ENCODE measurements at regions of chr22 and their contacts with region 1.

Region 1: GRCh38 chr22:49992921-49993648 is 19.5 kb downstream of the IL17REL start:
- DNase-seq: peak; percentile 84
- ATAC-seq: peak; percentile 97
- H3K4me3 Mint-ChIP-seq: no peak overlapping the region
- H3K27ac Mint-ChIP-seq: no peak overlapping the region
- H3K4me1 Mint-ChIP-seq: peaks cover 8% of the 10 kb centered on the region
- H3K27me3 Mint-ChIP-seq: peaks cover 3% of the 10 kb centered on the region
- CTCF ChIP-seq: peak; percentile 84

Region 2: GRCh38 chr22:49960159-49961004 is 32.7 kb before region 1 on chr22 and contains the start of gene PIM3:
- CTCF ChIA-PET with region 1: no interaction called
- POLR2A ChIA-PET with region 1: no interaction called
- intact Hi-C with region 1: no loop called
- DNase-seq: peak; percentile 96
- ATAC-seq: peak; percentile 79
- H3K4me3 Mint-ChIP-seq: peak within 1 kb of the TSS; percentile 95
- H3K27ac Mint-ChIP-seq: peak within 1 kb of the TSS; percentile 95
- H3K4me1 Mint-ChIP-seq: peaks cover 25% of the 10 kb centered on the region
- H3K27me3 Mint-ChIP-seq: no peaks in the 10 kb centered on the region
- CTCF ChIP-seq: no peak
- total RNA-seq, gene PIM3: 146 to 158 TPM

Region 3: DNA sequence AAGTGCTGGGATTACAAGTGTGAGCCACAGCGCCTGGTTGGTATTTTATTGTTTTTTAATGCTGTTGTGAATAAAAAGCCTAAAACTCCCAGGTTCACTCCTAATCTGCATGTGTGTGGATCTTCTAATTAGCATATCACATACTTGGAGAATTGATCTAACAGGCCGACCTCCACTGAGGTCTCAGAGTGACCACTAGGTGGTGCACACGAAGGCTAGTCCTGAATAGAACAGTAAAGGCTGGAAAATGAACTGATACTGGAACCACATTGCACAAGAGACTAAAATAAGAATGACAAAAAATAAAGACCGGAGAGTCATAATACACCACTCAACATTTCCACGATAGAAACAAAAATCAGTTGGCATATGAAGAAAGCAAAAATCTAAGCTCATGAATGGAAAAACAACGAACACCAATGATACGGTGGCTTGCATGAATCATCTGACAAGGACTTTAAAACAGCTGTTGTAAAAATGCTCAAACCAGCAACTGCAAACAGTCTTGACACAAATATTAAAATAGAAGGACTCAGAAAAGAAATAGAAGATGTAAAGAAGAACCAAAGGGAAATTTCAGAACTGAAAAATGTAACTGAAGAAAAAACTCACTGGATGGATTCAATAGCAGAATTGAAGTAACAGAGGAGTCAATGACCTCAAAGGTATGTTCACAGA is 13.4 kb before region 1 on chr22:
- CTCF ChIA-PET with region 1: interaction called, 16 read pairs
- POLR2A ChIA-PET with region 1: interaction called, 3 read pairs
- intact Hi-C with region 1: no loop called
- DNase-seq: peak; percentile 67
- ATAC-seq: peak; percentile 7
- H3K4me3 Mint-ChIP-seq: peak overlapping the region; percentile 7
- H3K27ac Mint-ChIP-seq: peak overlapping the region; percentile 72
- H3K4me1 Mint-ChIP-seq: peaks cover 42% of the 10 kb centered on the region
- H3K27me3 Mint-ChIP-seq: peaks cover 5% of the 10 kb centered on the region
- CTCF ChIP-seq: peak; percentile 65